Transverse colon (tissue), 4 donors: ENCODE measurements at regions of chr12 and their contacts with region 1.

Region 1: DNA sequence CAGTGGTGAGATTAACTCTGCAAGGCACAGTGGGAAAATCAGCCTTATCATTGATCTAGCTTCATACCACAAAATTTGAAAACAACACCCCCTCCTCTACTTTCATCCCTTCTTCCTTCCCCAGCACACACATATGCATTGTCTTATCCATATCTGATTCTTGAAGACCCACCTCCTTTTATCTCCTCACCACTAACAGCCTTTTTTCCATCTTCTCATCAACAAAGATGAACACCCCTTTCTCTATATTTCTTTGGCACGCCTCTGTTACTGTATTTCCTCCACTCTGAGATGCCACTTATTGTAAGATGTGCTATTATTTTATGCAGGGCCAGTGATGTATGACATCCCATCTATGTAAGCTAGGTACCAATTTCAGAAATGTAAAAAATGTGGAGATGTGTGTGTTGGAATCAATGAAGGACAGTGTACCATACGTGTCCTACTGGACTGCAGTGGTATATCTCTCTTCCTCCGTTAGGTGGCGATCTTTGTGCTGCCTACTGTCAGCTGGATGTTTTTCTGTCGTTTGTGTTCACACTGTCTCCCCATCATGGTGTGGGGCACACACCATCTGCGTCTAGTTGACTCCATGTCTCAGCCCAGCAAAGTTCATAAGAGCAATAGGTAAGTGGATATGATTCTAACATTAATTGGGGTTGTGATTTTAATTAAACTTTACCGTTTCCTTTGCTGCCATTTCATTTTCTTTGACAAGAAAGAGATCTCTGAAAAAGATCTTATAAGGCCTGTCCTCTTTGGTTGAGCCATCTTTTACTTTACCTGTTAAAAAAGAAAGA is 24.0 kb downstream of the CCDC38 start:
- DNase-seq: peak; percentile 15
- H3K4me3 ChIP-seq: no peak overlapping the region
- H3K27ac ChIP-seq: no peak overlapping the region
- H3K4me1 ChIP-seq: no peaks in the 10 kb centered on the region
- H3K27me3 ChIP-seq: no peaks in the 10 kb centered on the region
- CTCF ChIP-seq: peak; percentile 65 to 83 (median 72)
- EP300 ChIP-seq: no peak
- POLR2A ChIP-seq: no peak

Region 2: DNA sequence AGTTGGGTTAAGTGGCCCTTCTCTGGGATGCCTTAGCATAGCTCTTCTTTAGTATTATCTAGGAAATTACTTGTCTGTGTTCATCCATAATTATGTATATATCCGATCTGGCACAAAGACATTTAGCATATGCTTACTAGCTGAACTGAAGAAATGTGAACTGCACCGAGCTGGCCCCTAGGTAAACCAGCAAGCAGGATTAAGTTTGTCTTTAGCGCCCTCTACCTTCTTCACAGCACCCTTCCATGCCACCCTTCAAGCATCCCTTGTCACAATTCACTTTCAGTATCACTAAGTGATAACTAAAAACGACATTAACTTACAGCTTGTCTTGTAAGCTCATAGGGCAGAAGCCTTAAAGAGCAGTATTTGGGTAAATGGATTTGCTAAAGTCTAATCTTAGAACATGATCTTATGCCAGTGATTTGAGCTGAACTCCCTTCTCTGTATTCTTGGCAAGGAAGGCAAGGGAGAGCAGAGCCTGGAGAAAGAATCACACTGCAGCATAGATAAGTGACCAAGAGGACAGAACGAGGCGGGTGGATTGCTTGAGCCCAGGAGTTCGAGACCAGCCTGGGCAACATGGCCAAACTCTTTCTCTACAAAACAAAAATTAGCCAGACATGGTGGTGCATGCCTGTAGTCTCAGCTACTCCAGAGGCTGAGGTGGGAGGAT is 80.4 kb after region 1 on chr12:
- in situ Hi-C with region 1: loop called in 1 of 4 experiments (anchors 5 kb)
- intact Hi-C with region 1: loop called (anchors 5 kb)
- DNase-seq: peak; percentile 33
- H3K4me3 ChIP-seq: no peak overlapping the region
- H3K27ac ChIP-seq: no peak overlapping the region
- H3K4me1 ChIP-seq: peaks cover 0 to 7% (median 2%) of the 10 kb centered on the region in 4 donors
- H3K27me3 ChIP-seq: no peaks in the 10 kb centered on the region
- CTCF ChIP-seq: peak; percentile 62 to 67 (median 64)
- EP300 ChIP-seq: no peak
- POLR2A ChIP-seq: no peak

Region 3: DNA sequence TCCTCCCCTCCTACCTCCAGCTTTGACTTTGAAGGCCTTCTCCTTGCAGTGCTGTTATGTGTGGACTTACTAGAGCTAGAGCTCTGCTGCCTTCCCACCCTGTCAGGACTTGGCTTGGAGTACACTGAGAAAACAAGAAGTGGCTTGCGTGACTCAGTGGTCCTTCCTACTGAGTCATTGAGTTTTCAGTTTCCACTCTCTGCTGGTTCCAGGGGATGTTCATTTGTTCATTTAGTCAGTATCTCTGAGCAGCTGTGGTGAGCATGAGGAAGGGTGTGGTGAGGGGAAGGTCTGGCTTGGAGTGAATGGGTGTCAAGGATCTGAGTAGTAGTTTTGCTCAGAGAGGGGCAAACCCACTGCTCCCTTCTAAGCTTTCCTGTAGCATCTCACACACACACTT is 258.6 kb after region 1 on chr12:
- in situ Hi-C with region 1: no loop called
- intact Hi-C with region 1: no loop called
- DNase-seq: no peak
- H3K4me3 ChIP-seq: no peak overlapping the region
- H3K27ac ChIP-seq: no peak overlapping the region
- H3K4me1 ChIP-seq: no peaks in the 10 kb centered on the region
- H3K27me3 ChIP-seq: no peaks in the 10 kb centered on the region
- CTCF ChIP-seq: no peak
- EP300 ChIP-seq: no peak
- POLR2A ChIP-seq: no peak

Region 4: GRCh38 chr12:97267594-97268202 is 1349.3 kb after region 1 on chr12:
- in situ Hi-C with region 1: no loop called
- intact Hi-C with region 1: no loop called
- DNase-seq: no peak
- H3K4me3 ChIP-seq: no peak overlapping the region
- H3K27ac ChIP-seq: no peak overlapping the region
- H3K4me1 ChIP-seq: no peaks in the 10 kb centered on the region
- H3K27me3 ChIP-seq: no peaks in the 10 kb centered on the region
- CTCF ChIP-seq: no peak
- EP300 ChIP-seq: no peak
- POLR2A ChIP-seq: no peak